Right ventricle myocardium inferior (tissue), 1 donor: ENCODE measurements at regions of chr3 and their contacts with region 1.

Region 1: GRCh38 chr3:134381827-134382442 is 7.7 kb upstream of the AMOTL2 start:
- DNase-seq: no peak
- ATAC-seq: no peak

Region 2: GRCh38 chr3:134449277-134449676 is 67.3 kb after region 1 on chr3:
- intact Hi-C with region 1: loop called (anchors 5 kb)
- DNase-seq: no peak
- ATAC-seq: peak; percentile 65